ENCODE measurements at regions of chr1 and their contacts with region 1.

Region 1: GRCh38 chr1:230066466-230067404 is at the start of gene GALNT2:
- DNase-seq: peak; percentile 71 to 96 (median 86)
- ATAC-seq: peak; percentile 90
- H3K4me3 ChIP-seq: peak within 1 kb of the TSS; percentile 74 to 81
- H3K4me3 Mint-ChIP-seq: peak within 1 kb of the TSS; percentile 89
- H3K27ac ChIP-seq: peak within 1 kb of the TSS; percentile 64 to 78
- H3K27ac Mint-ChIP-seq: peak within 1 kb of the TSS; percentile 93
- H3K4me1 ChIP-seq: peaks cover 14% of the 10 kb centered on the region
- H3K4me1 Mint-ChIP-seq: peaks cover 41% of the 10 kb centered on the region
- H3K27me3 ChIP-seq: no peaks in the 10 kb centered on the region
- H3K27me3 Mint-ChIP-seq: no peaks in the 10 kb centered on the region
- CTCF ChIP-seq: no peak
- total RNA-seq, gene GALNT2: 13.6 to 15.4 TPM

Region 2: GRCh38 chr1:228405987-228406265 is 1660.8 kb before region 1 on chr1:
- CTCF ChIA-PET with region 1: no interaction called
- POLR2A ChIA-PET with region 1: no interaction called
- intact Hi-C with region 1: loop called in 1 of 2 experiments (anchors 10 kb)
- DNase-seq: peak in 1 of 9 experiments; percentile 52
- ATAC-seq: peak; percentile 8
- H3K4me3 ChIP-seq: peak overlapping the region; percentile 75 to 88
- H3K4me3 Mint-ChIP-seq: peak overlapping the region; percentile 91
- H3K27ac ChIP-seq: peak overlapping the region in 1 of 2 experiments; percentile 76
- H3K27ac Mint-ChIP-seq: peak overlapping the region; percentile 87
- H3K4me1 ChIP-seq: peaks cover 42% of the 10 kb centered on the region
- H3K4me1 Mint-ChIP-seq: peaks cover 53% of the 10 kb centered on the region
- H3K27me3 ChIP-seq: no peaks in the 10 kb centered on the region
- H3K27me3 Mint-ChIP-seq: no peaks in the 10 kb centered on the region
- CTCF ChIP-seq: no peak

Region 3: GRCh38 chr1:229341774-229342655 is 724.7 kb before region 1 on chr1:
- CTCF ChIA-PET with region 1: no interaction called
- POLR2A ChIA-PET with region 1: no interaction called
- intact Hi-C with region 1: loop called in 1 of 2 experiments (anchors 2 kb)
- DNase-seq: peak; percentile 61 to 90 (median 82)
- ATAC-seq: peak; percentile 80
- H3K4me3 ChIP-seq: peak overlapping the region; percentile 65 to 74
- H3K4me3 Mint-ChIP-seq: peak overlapping the region; percentile 92
- H3K27ac ChIP-seq: peak overlapping the region; percentile 48 to 83
- H3K27ac Mint-ChIP-seq: peak overlapping the region; percentile 87
- H3K4me1 ChIP-seq: peaks cover 18% of the 10 kb centered on the region
- H3K4me1 Mint-ChIP-seq: peaks cover 40% of the 10 kb centered on the region
- H3K27me3 ChIP-seq: no peaks in the 10 kb centered on the region
- H3K27me3 Mint-ChIP-seq: no peaks in the 10 kb centered on the region
- CTCF ChIP-seq: no peak

Region 4: GRCh38 chr1:229558571-229559335 is 508.0 kb before region 1 on chr1 and contains the start of gene ABCB10:
- CTCF ChIA-PET with region 1: no interaction called
- POLR2A ChIA-PET with region 1: interaction called, 4 read pairs
- intact Hi-C with region 1: loop called (anchors 2 kb)
- DNase-seq: peak; percentile 56 to 93 (median 81)
- ATAC-seq: peak; percentile 81
- H3K4me3 ChIP-seq: peak within 1 kb of the TSS; percentile 74 to 82
- H3K4me3 Mint-ChIP-seq: peak within 1 kb of the TSS; percentile 95
- H3K27ac ChIP-seq: peak within 1 kb of the TSS; percentile 52 to 70
- H3K27ac Mint-ChIP-seq: peak within 1 kb of the TSS; percentile 90
- H3K4me1 ChIP-seq: peaks cover 18% of the 10 kb centered on the region
- H3K4me1 Mint-ChIP-seq: peaks cover 37% of the 10 kb centered on the region
- H3K27me3 ChIP-seq: no peaks in the 10 kb centered on the region
- H3K27me3 Mint-ChIP-seq: no peaks in the 10 kb centered on the region
- CTCF ChIP-seq: peak; percentile 30
- total RNA-seq, gene ABCB10: 6.1 to 7.6 TPM

Region 5: DNA sequence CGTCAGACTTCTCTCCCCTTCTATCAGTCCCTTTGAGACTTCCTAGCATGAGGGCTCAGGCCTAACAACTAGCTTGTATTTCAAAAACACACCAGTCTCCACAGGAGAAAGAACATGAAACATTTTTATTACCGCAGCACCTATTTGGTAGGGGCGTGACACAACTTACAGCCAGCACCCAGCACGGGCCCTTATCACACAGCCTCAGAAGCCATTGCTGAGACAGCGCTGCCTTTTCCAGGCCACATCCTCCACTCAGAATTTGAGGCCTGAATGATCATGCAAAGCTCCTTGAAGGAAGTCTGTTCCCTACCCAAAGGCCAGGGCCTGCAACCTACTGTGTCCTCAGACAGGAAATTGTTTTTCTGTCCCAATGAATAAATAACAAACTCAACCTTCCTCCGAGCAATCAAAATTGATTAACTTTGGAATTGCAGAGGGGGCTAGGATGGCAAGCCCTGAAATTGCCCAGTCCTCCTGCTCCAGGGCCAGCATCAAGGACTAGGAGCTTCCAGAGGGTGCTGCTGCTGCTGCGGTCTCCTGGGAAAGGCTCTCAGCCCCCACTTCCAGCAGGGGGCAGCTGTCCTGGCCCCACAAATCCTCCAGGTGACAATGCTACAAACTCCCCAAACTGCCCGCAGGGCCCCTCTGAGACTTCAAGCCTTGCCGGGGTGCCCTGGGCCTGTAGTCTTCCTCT is 94.0 kb before region 1 on chr1:
- CTCF ChIA-PET with region 1: no interaction called
- POLR2A ChIA-PET with region 1: no interaction called
- intact Hi-C with region 1: no loop called
- DNase-seq: peak in 2 of 9 experiments; percentile 13 to 24
- ATAC-seq: no peak
- H3K4me3 ChIP-seq: no peak overlapping the region
- H3K4me3 Mint-ChIP-seq: no peak overlapping the region
- H3K27ac ChIP-seq: no peak overlapping the region
- H3K27ac Mint-ChIP-seq: no peak overlapping the region
- H3K4me1 ChIP-seq: no peaks in the 10 kb centered on the region
- H3K4me1 Mint-ChIP-seq: no peaks in the 10 kb centered on the region
- H3K27me3 ChIP-seq: peaks cover 0 to 2% of the 10 kb centered on the region in 2 experiments
- H3K27me3 Mint-ChIP-seq: peaks cover 2% of the 10 kb centered on the region
- CTCF ChIP-seq: no peak

Region 6: GRCh38 chr1:230104395-230105244 is 37.9 kb after region 1 on chr1:
- CTCF ChIA-PET with region 1: no interaction called
- POLR2A ChIA-PET with region 1: no interaction called
- intact Hi-C with region 1: loop called in 1 of 2 experiments (anchors 5 kb)
- DNase-seq: peak in 8 of 9 experiments; percentile 36 to 71 (median 56)
- ATAC-seq: peak; percentile 83
- H3K4me3 ChIP-seq: no peak overlapping the region
- H3K4me3 Mint-ChIP-seq: peak overlapping the region; percentile 29
- H3K27ac ChIP-seq: no peak overlapping the region
- H3K27ac Mint-ChIP-seq: no peak overlapping the region
- H3K4me1 ChIP-seq: peaks cover 32% of the 10 kb centered on the region
- H3K4me1 Mint-ChIP-seq: peaks cover 62% of the 10 kb centered on the region
- H3K27me3 ChIP-seq: no peaks in the 10 kb centered on the region
- H3K27me3 Mint-ChIP-seq: no peaks in the 10 kb centered on the region
- CTCF ChIP-seq: no peak

Region 7: DNA sequence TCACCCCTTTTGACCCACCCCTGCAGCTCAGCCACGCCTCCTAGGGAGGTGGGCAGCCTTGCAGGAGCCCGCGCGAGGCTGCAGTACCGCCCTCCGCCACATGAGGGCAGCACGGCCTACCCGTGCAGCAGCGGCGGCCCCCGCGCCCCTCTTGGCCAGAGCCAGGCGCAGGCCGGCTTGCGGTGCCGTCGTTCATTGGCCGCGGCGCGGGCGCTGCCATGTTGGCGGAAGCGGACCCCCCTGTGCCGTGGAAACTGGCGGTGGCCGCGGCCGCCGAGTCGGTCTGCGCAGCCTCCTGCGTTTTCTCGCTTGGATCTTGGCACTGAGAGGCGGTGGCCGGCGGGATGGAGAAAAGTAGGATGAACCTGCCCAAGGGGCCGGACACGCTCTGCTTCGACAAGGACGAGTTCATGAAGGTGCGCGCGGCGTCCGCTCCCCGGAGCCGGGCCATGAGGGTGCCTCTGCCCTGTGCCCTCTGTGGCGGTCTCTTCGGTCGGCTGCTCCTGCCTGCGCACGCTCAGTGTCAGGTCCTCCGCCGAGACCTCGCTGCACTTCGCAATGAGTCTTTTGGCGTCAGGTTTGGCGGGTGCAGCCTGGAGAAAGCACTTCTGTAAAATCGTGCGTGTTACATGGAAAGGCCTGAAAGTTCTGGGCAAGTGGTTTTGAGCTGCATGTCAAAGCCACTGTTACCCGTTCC is 575.7 kb after region 1 on chr1 and contains the start of gene COG2:
- CTCF ChIA-PET with region 1: no interaction called
- POLR2A ChIA-PET with region 1: no interaction called
- intact Hi-C with region 1: loop called (anchors 2 kb)
- DNase-seq: peak; percentile 92 to 99 (median 96)
- ATAC-seq: peak; percentile 96
- H3K4me3 ChIP-seq: peak within 1 kb of the TSS; percentile 72 to 92
- H3K4me3 Mint-ChIP-seq: peak within 1 kb of the TSS; percentile 99
- H3K27ac ChIP-seq: peak within 1 kb of the TSS; percentile 73 to 82
- H3K27ac Mint-ChIP-seq: peak within 1 kb of the TSS; percentile 96
- H3K4me1 ChIP-seq: peaks cover 36% of the 10 kb centered on the region
- H3K4me1 Mint-ChIP-seq: peaks cover 54% of the 10 kb centered on the region
- H3K27me3 ChIP-seq: peaks cover 0 to 2% of the 10 kb centered on the region in 2 experiments
- H3K27me3 Mint-ChIP-seq: peaks cover 13% of the 10 kb centered on the region
- CTCF ChIP-seq: peak; percentile 100
- total RNA-seq, gene COG2: 20.1 to 25.7 TPM

Region 8: DNA sequence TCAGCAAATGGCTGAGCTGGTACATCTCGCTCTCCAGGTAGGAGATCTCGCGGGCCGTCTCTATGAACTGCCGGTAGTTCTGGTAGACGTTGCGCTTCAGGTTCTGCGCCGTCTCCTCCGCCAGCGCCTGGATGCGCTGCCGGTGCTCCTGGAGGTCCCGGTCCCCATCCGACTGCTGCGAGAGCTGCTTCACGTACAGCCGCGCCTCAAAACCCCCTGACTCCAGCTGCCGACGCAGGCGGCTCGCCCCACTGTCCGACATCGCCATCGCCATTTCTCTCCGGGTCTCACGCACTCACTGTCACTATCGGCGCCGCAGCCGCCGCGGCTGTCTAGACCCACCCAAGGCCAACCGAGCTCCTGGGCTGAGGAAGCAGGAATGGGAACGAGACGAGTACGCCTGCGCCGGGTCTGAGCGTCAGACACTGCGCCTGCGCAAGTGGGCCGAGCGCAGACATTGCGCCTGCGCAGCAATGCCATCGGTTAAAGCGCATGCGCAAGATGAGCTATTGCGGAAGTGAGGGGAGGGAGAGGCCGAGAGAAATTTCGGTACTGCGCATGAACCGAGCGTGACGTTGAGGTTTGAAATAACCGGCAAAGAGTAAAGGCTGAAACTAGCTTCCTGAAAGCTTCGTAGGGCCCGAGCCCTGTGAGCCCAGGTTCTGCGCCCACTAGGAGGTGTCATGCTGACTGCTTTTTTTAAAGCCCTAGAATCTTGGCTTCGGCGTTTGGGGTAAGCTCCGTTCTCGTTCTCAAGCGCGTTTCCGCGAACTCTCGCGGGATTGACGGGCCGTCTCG is 1270.9 kb after region 1 on chr1 and contains the start of gene EXOC8:
- CTCF ChIA-PET with region 1: no interaction called
- POLR2A ChIA-PET with region 1: no interaction called
- intact Hi-C with region 1: loop called in 1 of 2 experiments (anchors 10 kb)
- DNase-seq: peak; percentile 95 to 99 (median 98)
- ATAC-seq: peak; percentile 83
- H3K4me3 ChIP-seq: peak within 1 kb of the TSS; percentile 95 to 98
- H3K4me3 Mint-ChIP-seq: peak within 1 kb of the TSS; percentile 97
- H3K27ac ChIP-seq: peak within 1 kb of the TSS; percentile 97 to 98
- H3K27ac Mint-ChIP-seq: peak within 1 kb of the TSS; percentile 99
- H3K4me1 ChIP-seq: peaks cover 55% of the 10 kb centered on the region
- H3K4me1 Mint-ChIP-seq: peaks cover 64% of the 10 kb centered on the region
- H3K27me3 ChIP-seq: no peaks in the 10 kb centered on the region
- H3K27me3 Mint-ChIP-seq: no peaks in the 10 kb centered on the region
- CTCF ChIP-seq: no peak
- total RNA-seq, gene EXOC8: 28.8 to 28.9 TPM

Measured in CD8-positive, alpha-beta T cell (primary cell).